ENCODE measurements at regions of chr3 and their contacts with region 1.

Region 1: DNA sequence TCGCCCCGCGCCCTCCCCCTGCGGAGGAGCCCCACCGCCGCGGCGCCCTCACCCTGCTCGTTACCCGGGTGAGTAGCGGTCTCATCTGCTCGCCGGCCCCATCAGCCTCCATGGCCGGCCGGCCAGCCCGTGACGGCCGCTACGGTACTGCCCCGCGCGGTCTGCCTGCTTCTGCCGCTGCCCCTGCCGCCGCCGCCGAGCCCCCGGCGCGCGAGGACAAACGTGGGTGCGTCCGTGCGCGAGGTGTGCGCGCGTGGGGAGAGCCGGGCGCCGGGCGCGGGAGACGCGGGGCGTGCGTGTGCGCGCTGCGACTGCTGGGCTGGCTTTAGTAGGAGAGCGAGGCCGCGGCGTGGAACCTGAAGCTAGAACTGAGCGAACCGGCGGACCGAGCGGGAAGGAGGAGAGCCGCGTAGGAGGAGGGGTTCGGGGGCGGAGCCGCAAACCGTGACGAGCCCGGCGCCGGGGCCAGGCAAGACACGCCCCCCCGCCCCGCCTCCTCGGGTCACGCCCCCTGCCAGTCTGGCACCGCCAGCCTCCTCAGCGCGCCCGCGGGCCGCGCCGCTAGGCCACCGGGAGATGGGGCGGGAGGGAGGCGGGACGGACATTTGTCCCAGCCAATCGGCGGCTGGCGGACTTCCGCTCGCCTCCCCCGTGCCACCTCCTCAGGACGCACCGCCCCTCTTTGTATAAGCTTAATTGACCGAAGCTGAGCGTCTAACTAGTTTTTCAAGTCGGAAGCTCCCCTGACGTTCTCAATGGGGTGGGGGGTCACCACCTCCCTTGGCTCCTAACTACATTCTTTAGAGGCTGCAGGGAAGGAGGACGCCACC is at the start of gene SLC4A7:
- DNase-seq: peak; percentile 99
- H3K4me3 Mint-ChIP-seq: peak within 1 kb of the TSS; percentile 100
- H3K27ac Mint-ChIP-seq: peak within 1 kb of the TSS; percentile 96
- H3K4me1 Mint-ChIP-seq: peaks cover 28% of the 10 kb centered on the region
- H3K27me3 Mint-ChIP-seq: no peaks in the 10 kb centered on the region
- total RNA-seq, gene SLC4A7: 62.1 to 62.3 TPM

Region 2: DNA sequence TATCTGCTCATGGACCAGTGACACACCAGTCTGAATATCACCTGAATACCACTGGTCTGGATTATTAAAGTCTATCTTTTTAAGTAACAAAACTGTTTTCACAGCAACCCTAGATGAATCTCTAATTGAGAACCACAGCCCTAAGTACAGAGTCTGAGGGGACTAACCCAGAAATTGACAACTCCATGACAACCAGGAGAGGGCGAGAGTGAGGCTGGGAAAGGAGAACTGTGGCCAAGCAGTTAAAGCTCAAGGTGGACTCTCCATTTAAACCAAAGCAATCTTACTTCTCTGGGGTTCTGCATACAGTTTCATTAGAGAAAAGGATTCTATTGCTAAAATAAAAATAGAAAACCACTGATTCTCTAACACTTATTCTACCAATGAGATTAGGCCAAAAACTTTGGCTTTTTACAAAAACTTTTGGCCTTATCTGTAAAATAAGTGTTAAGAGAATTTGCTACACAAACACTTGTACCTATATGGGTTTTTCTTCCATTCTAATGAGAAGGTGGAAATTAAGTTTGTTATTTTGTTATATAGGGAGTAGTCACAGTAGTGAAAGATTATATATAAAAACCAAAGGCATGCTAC is 126.5 kb before region 1 on chr3:
- CTCF ChIA-PET with region 1: no interaction called
- POLR2A ChIA-PET with region 1: no interaction called
- intact Hi-C with region 1: loop called (anchors 1 kb)
- DNase-seq: peak; percentile 77
- H3K4me3 Mint-ChIP-seq: no peak overlapping the region
- H3K27ac Mint-ChIP-seq: no peak overlapping the region
- H3K4me1 Mint-ChIP-seq: peaks cover 26% of the 10 kb centered on the region
- H3K27me3 Mint-ChIP-seq: no peaks in the 10 kb centered on the region

Region 3: GRCh38 chr3:27454914-27455313 is 29.3 kb before region 1 on chr3:
- CTCF ChIA-PET with region 1: no interaction called
- POLR2A ChIA-PET with region 1: interaction called, 5 read pairs
- intact Hi-C with region 1: loop called (anchors 2 kb)
- DNase-seq: no peak
- H3K4me3 Mint-ChIP-seq: peak overlapping the region; percentile 10
- H3K27ac Mint-ChIP-seq: peak overlapping the region; percentile 58
- H3K4me1 Mint-ChIP-seq: peaks cover 62% of the 10 kb centered on the region
- H3K27me3 Mint-ChIP-seq: no peaks in the 10 kb centered on the region

Region 4: DNA sequence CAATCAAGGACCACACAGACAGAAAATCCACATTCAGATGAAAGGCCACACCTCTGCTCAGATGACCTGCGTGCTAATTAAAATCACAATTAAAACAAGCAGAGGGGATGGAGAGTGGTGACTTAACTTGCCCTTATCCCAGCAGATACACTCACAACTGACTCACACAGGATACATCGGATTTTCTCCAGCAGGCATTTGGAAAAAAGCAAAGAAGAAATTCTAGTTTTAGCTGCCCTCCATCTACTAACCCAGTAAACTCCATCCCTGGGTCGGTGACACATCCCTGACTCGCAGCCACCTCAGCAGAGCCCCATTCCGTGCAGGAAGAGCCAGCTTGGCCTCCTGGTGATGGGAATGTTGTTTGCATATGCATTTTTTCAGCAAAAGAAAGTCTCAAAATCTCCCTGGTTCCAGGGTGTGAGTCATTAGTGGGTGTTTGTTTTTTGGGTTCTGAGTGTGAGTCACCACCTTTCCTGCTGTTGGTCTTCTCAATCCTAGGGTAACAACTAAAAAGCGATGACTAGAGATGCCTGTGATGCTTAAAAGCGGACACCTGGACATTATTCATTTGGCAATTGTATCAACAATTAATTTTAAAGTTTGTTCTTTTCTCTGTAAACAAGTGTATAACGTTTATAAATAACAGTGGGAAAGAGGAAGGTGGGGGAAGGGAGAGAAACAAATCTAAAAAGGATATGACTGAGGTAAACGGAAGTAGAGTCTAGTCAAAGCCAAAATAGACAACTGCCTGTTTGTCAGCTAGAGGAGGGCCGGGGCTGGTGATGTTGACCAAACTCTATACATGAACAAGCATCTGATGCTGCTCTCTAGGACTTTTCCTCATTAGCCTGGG is 49.7 kb after region 1 on chr3:
- CTCF ChIA-PET with region 1: no interaction called
- POLR2A ChIA-PET with region 1: interaction called, 5 read pairs
- intact Hi-C with region 1: loop called (anchors 1 kb)
- DNase-seq: peak; percentile 70
- H3K4me3 Mint-ChIP-seq: peak overlapping the region; percentile 42
- H3K27ac Mint-ChIP-seq: peak overlapping the region; percentile 92
- H3K4me1 Mint-ChIP-seq: peaks cover 23% of the 10 kb centered on the region
- H3K27me3 Mint-ChIP-seq: no peaks in the 10 kb centered on the region

Region 5: DNA sequence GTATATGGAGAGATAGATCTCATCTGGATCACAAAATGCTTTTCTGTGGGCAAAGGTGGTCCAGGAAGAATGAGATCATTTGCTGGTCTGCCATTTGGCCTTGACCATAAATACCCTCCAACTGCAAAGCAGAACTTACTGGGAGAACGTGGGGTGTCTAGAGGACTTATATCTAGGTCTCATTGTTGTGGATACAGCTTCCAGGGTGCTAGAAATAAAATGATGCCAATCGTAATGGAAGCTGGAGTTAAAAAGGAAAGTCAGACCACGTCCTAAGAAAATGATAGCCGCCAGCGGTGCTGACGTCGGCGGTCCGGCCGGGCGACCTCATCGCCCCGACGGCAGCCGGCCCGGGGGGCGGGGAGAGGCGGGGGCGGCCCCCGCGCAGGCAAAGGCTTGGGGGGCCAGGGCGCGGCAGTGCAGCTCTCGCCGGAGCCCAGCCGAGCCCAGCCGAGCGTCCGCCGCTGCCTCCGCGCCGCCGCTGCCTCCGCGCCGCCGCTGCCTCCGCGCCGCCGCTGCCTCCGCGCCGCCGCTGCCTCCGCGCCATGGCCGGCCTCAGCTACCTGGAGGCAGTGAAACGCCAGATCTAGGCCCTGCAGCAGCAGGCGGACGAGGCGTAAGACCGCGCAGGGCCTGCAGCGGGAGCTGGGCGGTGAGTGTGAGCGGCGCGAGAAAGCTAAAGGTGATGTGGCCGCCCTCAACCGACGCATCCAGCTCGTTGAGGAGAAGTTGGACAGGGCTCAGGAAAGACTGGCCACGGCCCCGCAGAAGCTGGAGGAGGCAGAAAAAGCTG is 148.4 kb after region 1 on chr3:
- CTCF ChIA-PET with region 1: interaction called, 6 read pairs
- POLR2A ChIA-PET with region 1: interaction called, 3 read pairs
- intact Hi-C with region 1: loop called (anchors 1 kb)
- DNase-seq: peak; percentile 56
- H3K4me3 Mint-ChIP-seq: peak overlapping the region; percentile 83
- H3K27ac Mint-ChIP-seq: peak overlapping the region; percentile 85
- H3K4me1 Mint-ChIP-seq: peaks cover 44% of the 10 kb centered on the region
- H3K27me3 Mint-ChIP-seq: no peaks in the 10 kb centered on the region

Region 6: DNA sequence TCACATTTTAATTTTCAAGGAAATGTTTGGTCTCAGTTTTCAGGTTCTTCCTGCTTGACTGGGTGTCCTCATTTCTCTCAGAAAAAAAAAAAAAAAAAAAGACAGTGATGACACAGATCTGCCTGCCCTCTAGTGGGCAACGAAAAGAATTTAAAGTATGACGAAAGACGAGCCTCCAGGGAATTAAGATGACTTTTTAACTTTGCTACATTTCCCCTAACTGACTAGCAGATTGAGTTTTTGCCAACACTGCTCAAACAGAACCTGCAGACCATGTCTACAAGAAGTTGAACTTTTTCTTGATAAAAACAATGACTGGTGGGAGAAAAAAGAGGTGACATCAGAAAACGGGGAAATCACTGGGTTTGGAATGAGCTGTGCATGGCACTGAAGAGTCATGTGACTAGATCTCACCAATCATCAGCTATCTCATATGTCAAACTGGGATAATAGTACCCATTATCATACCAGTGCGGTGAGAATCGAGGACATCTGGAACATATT is 197.1 kb after region 1 on chr3:
- CTCF ChIA-PET with region 1: interaction called, 10 read pairs
- POLR2A ChIA-PET with region 1: no interaction called
- intact Hi-C with region 1: loop called (anchors 1 kb)
- DNase-seq: no peak
- H3K4me3 Mint-ChIP-seq: peak overlapping the region; percentile 68
- H3K27ac Mint-ChIP-seq: peak overlapping the region; percentile 72
- H3K4me1 Mint-ChIP-seq: peaks cover 19% of the 10 kb centered on the region
- H3K27me3 Mint-ChIP-seq: no peaks in the 10 kb centered on the region

Region 7: DNA sequence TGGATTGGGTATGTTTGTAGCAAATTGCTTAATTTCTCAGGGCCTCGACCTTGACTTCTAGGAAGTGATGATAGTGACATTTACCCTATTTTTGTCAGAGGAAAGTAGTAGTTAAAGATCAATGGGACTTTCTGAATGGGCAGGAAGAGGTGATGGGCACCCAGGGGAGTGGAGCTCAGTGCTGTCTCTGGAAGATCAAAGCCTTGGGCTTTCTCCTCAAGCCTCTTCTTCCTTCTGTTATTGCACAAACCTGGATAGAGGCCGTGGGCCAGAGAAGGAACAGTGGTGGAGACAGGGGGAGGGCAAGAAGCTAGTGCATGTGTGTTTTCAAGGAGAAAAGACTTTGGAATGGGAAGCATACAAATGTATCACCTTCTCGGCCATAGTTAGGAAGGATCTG is 282.8 kb after region 1 on chr3:
- CTCF ChIA-PET with region 1: no interaction called
- POLR2A ChIA-PET with region 1: no interaction called
- intact Hi-C with region 1: no loop called
- DNase-seq: no peak
- H3K4me3 Mint-ChIP-seq: no peak overlapping the region
- H3K27ac Mint-ChIP-seq: no peak overlapping the region
- H3K4me1 Mint-ChIP-seq: peaks cover 6% of the 10 kb centered on the region
- H3K27me3 Mint-ChIP-seq: no peaks in the 10 kb centered on the region

Region 8: DNA sequence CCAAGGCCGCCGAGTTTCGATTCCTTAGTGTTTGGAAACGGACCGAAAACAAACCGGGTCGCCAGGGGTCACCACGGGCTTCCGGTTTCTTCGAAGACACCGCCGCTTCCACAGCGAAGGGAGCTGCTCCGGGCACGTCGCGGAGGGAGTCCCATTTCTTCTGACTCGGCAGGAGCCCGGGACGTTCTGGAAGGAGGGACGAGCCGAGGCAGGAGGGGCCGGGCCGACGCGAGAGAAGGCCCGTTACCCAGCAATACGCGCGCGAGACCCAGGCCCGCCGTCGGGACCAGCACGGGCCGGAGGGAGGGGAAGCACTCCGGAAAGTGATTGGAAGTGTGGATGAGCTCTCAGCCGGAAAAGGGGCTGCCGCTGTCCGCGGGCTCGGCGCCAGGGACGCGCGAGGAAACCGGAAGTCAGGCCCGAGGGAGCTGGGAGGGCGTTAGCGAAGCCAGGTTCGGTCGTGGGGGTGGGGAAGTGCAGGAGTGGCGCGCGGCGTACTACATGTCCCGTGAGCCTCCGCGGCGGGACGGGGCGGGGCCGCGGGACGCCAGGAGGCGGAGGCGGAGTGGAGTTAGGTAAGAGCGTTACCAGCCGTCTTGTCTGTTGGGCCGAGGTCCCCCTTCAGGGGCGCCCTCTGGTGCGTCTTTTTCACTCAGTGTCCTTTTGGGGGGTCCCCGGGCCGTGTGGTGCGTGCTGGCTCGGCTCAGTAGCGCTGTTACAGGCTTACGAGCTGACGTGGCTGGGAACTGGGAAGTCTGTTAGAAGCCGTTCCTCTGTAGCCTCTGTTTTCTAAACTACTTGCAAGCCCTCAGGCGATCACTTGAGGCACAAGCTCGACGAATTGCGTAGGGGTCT is 864.6 kb after region 1 on chr3 and contains the starts of genes AZI2 and ZCWPW2:
- CTCF ChIA-PET with region 1: no interaction called
- POLR2A ChIA-PET with region 1: interaction called, 6 read pairs
- intact Hi-C with region 1: loop called (anchors 1 kb)
- DNase-seq: peak; percentile 94
- H3K4me3 Mint-ChIP-seq: peak within 1 kb of the TSS; percentile 95
- H3K27ac Mint-ChIP-seq: peak within 1 kb of the TSS; percentile 88
- H3K4me1 Mint-ChIP-seq: peaks cover 40% of the 10 kb centered on the region
- H3K27me3 Mint-ChIP-seq: no peaks in the 10 kb centered on the region
- total RNA-seq, gene AZI2: 35.5 to 38.9 TPM
- total RNA-seq, gene ZCWPW2: 0.39 to 0.43 TPM

Measured in activated CD4-positive, alpha-beta memory T cell treated with anti-CD3 and anti-CD28 coated beads for 36 hours (primary cell).